AG04450 (cell line): ENCODE measurements at regions of chr16 and their contacts with region 1.

Region 1: DNA sequence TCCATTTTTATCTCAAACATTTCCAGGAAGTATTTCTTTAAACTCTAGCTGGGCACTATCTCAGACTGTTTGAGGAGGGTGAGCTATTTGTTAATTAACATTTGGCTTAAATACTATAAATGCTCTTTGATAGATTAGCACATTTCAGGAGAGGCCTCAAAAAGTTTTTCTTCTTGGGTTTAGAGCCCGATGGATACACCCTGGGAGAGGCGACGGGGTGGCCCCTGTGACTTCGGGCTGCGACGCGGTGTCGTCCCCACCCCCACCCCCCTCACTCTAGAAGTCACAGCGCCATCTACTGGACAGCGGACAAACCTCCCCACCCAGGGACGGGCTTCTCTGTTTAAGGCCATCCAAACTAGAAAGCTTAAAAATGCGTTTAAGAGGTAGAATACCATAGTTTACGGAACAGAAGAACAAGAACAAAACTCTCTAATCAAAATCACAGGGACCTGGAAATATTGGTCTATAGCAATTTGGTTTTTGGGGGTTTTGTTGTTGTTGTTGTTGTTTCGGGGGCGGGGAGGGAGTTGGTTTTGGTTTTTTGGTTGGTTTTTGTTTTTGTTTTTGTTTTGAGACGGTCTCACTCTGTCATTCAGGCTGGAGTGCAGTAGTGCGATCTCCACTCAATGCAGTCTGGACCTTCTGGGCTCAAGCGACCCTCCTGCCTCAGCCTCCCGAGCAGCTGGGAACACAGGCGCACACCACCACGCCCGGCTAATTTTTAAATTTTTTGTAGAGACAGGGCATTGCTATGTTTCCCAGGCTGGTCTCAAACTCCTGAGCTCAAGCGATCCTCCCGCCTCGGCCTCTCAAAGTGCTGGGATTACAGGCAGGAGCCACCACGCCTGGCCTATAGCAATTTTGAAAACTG is 254.4 kb downstream of the C16orf95 start:
- DNase-seq: no peak
- H3K4me3 ChIP-seq: peak overlapping the region; percentile 37
- H3K27ac ChIP-seq: no peak overlapping the region
- H3K27me3 ChIP-seq: peaks cover 2% of the 10 kb centered on the region
- CTCF ChIP-seq: peak; percentile 91

Region 2: GRCh38 chr16:85639536-85640253 is 1423.1 kb before region 1 on chr16:
- CTCF ChIA-PET with region 1: no interaction called
- POLR2A ChIA-PET with region 1: no interaction called
- DNase-seq: no peak
- H3K4me3 ChIP-seq: no peak overlapping the region
- H3K27ac ChIP-seq: no peak overlapping the region
- H3K27me3 ChIP-seq: no peaks in the 10 kb centered on the region
- CTCF ChIP-seq: no peak

Region 3: GRCh38 chr16:86570558-86571529 is 492.0 kb before region 1 on chr16:
- CTCF ChIA-PET with region 1: interaction called, 148 read pairs
- POLR2A ChIA-PET with region 1: no interaction called
- DNase-seq: no peak
- H3K4me3 ChIP-seq: peak overlapping the region; percentile 88
- H3K27ac ChIP-seq: no peak overlapping the region
- H3K27me3 ChIP-seq: no peaks in the 10 kb centered on the region
- CTCF ChIP-seq: no peak

Region 4: GRCh38 chr16:87017365-87018012 is 45.3 kb before region 1 on chr16:
- CTCF ChIA-PET with region 1: interaction called, 20 read pairs
- POLR2A ChIA-PET with region 1: no interaction called
- DNase-seq: peak; percentile 46
- H3K4me3 ChIP-seq: no peak overlapping the region
- H3K27ac ChIP-seq: no peak overlapping the region
- H3K27me3 ChIP-seq: no peaks in the 10 kb centered on the region
- CTCF ChIP-seq: peak; percentile 50

Region 5: DNA sequence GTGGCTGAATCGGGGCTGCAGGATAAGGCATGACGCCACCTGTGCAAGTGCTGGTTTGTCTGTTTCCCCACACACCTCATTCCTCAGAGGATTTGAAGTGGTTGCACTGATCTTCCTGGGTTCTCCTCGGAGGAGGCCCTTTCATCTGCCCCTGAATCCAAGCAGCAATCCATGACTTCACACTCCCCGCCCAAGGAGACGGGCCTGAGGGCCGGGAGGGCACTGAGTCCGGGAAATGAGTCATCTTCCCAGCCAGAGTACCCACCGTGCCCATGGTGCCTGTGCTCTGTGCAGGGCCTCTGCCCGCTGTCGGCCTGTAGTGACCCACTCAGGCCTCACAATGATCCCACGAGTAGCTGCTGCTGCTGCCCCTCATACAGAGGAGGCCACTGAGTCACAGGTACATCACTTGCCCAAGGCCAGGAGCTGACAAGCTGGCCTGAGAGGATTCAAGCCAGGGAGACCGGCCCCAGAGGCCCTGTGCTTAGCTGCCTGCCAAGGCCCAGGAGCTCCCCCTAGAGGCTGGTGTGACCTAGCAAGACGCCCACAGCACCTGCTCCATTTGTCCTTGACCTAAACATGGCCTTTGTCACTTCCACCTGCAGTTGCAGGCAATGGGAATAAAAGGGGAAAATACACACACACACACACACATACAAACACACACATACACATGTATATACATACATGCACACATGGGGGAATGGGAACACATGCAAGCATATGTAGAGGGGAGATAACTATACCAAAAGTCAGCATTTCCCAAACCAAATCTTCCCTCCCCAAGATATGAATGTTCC is 14.3 kb after region 1 on chr16:
- CTCF ChIA-PET with region 1: interaction called, 17 read pairs
- POLR2A ChIA-PET with region 1: no interaction called
- DNase-seq: peak; percentile 18
- H3K4me3 ChIP-seq: no peak overlapping the region
- H3K27ac ChIP-seq: no peak overlapping the region
- H3K27me3 ChIP-seq: peaks cover 4% of the 10 kb centered on the region
- CTCF ChIP-seq: peak; percentile 69

Region 6: DNA sequence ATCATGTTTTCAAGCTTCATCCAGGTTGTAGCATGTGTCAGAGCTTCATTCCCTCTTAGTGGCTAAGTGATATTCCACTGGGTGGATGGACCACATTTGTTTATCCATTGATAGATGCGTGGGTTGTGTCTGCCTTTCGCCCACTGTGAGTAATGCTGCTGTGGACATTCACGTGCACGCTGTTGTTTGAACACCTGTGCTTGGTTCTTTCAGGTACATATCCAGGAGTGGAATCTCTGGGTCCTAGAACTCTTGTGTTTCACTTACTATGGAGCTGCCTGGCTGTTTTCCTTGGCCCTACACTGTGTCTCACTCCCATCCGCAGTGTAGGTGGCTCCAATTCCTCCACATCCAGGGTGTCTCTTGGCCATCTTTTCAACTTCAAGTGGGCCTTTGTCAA is 30.2 kb after region 1 on chr16:
- CTCF ChIA-PET with region 1: no interaction called
- POLR2A ChIA-PET with region 1: no interaction called
- DNase-seq: no peak
- H3K4me3 ChIP-seq: no peak overlapping the region
- H3K27ac ChIP-seq: no peak overlapping the region
- H3K27me3 ChIP-seq: peaks cover 53% of the 10 kb centered on the region
- CTCF ChIP-seq: no peak